ENCODE measurements at regions of chr20 and their contacts with region 1.

Region 1: GRCh38 chr20:50731055-50731871 is at the start of gene PARD6B:
- DNase-seq: peak; percentile 99 to 100 (median 100)
- ATAC-seq: peak; percentile 84
- H3K4me3 ChIP-seq: peak within 1 kb of the TSS; percentile 89
- H3K27ac ChIP-seq: peak within 1 kb of the TSS; percentile 83
- H3K4me1 ChIP-seq: peaks cover 41 to 54% of the 10 kb centered on the region in 2 experiments
- H3K27me3 ChIP-seq: no peaks in the 10 kb centered on the region
- CTCF ChIP-seq: no peak
- EP300 ChIP-seq: no peak
- POLR2A ChIP-seq: peak; percentile 74
- RAD21 ChIP-seq: 0 out of 4 replicates have a peak, but pooled peaks of 1 of the 2 experiments have one; percentile 2
- polyA plus RNA-seq, gene PARD6B: 2.7 to 7.4 TPM

Region 2: DNA sequence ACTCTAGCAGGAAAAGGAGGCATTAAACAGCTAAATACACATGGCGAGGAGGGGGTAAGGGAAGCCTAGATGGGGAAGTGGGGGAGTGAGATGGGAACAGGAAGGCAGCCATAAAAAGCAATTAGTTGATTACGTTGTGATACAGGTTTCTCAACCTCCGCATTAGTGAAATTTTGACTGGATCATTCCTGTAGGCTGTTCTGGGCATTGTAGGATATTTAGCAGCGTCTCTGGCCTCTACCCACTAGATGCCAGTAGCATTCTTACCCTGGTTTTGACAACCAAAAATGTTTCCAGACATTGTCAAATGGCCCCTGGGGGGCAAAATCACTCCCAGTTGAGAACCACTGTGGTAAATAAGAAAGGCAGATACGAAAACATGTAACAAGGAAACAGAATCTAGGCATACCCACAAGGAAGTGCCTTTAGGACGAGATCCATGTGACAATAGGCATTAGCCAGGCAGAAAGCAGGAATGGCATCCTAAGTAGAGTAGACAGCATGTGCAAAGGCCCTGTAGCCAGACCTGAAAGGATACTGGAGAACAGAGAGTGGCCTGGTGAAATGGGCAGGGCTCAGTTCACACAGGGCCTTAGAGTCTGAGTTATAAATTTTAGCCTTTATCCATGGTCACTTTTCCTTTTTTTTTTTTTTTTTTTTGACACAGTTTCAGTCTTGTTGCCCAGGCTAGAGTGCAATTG is 246.8 kb before region 1 on chr20:
- CTCF ChIA-PET with region 1: no interaction called
- POLR2A ChIA-PET with region 1: no interaction called
- in situ Hi-C with region 1: loop called (anchors 10 kb)
- intact Hi-C with region 1: no loop called
- DNase-seq: no peak
- ATAC-seq: no peak
- H3K4me3 ChIP-seq: no peak overlapping the region
- H3K27ac ChIP-seq: peak overlapping the region; percentile 87
- H3K4me1 ChIP-seq: peaks cover 8 to 35% of the 10 kb centered on the region in 2 experiments; a peak in 4 of 5 replicates
- H3K27me3 ChIP-seq: no peaks in the 10 kb centered on the region
- CTCF ChIP-seq: peak in 1 of 3 experiments; percentile 28; a peak in 2 of 6 replicates
- EP300 ChIP-seq: no peak
- POLR2A ChIP-seq: no peak
- RAD21 ChIP-seq: 0 out of 4 replicates have a peak, but pooled peaks of 1 of the 2 experiments have one; percentile 9

Region 3: GRCh38 chr20:50690634-50691572 is 40.4 kb before region 1 on chr20 and contains the start of gene RIPOR3:
- CTCF ChIA-PET with region 1: no interaction called
- POLR2A ChIA-PET with region 1: interaction called, 3 read pairs
- in situ Hi-C with region 1: no loop called
- intact Hi-C with region 1: loop called (anchors 5 kb)
- DNase-seq: peak; percentile 82 to 97 (median 91)
- ATAC-seq: peak; percentile 81
- H3K4me3 ChIP-seq: peak within 1 kb of the TSS; percentile 52
- H3K27ac ChIP-seq: peak within 1 kb of the TSS; percentile 85
- H3K4me1 ChIP-seq: peaks cover 46 to 47% of the 10 kb centered on the region in 2 experiments
- H3K27me3 ChIP-seq: no peaks in the 10 kb centered on the region
- CTCF ChIP-seq: peak in 1 of 3 experiments; percentile 11; a peak in 1 of 6 replicates
- EP300 ChIP-seq: peak; percentile 96
- POLR2A ChIP-seq: peak; percentile 72
- RAD21 ChIP-seq: no peak
- polyA plus RNA-seq, gene RIPOR3: 3.3 to 3.8 TPM

Region 4: DNA sequence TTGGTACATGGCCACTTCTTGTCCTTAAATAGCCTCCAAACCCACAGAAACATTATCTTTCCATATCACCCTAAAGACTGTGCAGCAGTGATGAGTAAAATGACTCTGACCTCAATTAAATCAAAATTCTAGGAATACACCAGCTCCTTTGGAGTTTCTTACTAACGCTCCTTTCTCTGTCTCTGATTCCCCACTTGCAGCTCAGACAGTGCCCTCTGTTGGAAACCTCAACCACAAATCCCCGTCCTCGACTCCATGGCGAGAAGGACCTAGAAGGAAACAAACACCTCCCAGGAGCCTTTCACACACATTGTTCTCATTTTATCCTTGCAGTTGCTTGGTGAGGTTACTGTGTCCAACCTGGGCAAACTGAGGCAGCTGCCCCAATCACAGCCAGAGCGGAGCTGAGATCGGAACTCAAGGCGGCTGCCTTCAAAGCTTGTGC is 17.6 kb before region 1 on chr20:
- CTCF ChIA-PET with region 1: no interaction called
- POLR2A ChIA-PET with region 1: interaction called, 21 read pairs
- in situ Hi-C with region 1: no loop called
- intact Hi-C with region 1: no loop called
- DNase-seq: peak in 2 of 4 experiments; percentile 56 to 75
- ATAC-seq: peak; percentile 82
- H3K4me3 ChIP-seq: no peak overlapping the region
- H3K27ac ChIP-seq: no peak overlapping the region
- H3K4me1 ChIP-seq: peaks cover 15 to 22% of the 10 kb centered on the region in 2 experiments
- H3K27me3 ChIP-seq: no peaks in the 10 kb centered on the region
- CTCF ChIP-seq: peak; percentile 69 to 78 (median 69)
- EP300 ChIP-seq: peak; percentile 58
- POLR2A ChIP-seq: no peak
- RAD21 ChIP-seq: peak; percentile 75 to 86

Region 5: DNA sequence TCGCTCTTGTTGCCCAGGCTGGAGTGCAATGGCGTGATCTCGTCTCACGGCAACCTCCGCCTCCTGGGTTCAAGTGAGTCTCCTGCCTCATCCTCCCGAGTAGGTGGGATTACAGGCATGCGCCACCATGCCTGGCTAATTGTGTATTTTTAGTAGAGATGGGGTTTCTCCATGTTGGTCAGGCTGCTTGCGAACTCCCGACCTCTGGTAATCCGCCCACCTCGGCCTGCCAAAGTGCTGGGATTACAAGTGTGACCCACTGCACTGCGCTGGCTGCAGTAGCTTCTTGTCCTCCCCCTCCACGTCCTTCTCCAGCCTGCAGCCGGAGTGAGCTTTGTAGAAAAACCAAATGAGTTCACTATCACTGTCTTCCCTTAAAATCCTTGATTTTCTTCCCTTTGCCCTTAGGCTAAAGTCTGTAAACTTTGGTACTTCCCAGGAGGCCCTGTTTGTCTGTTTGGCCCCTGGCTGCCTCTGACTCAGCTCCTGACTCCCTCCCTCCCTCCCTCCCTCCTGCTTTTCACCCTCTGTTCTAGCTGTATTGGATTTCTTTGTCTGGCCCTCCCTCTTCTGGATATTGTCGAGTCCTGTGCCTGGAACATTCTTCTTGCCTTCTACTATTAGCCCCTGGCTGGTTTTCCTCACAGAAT is 13.0 kb after region 1 on chr20:
- CTCF ChIA-PET with region 1: no interaction called
- POLR2A ChIA-PET with region 1: interaction called, 10 read pairs
- in situ Hi-C with region 1: no loop called
- intact Hi-C with region 1: no loop called
- DNase-seq: peak; percentile 52 to 85 (median 67)
- ATAC-seq: peak; percentile 84
- H3K4me3 ChIP-seq: no peak overlapping the region
- H3K27ac ChIP-seq: peak overlapping the region; percentile 81
- H3K4me1 ChIP-seq: peaks cover 30 to 31% of the 10 kb centered on the region in 2 experiments
- H3K27me3 ChIP-seq: no peaks in the 10 kb centered on the region
- CTCF ChIP-seq: peak; percentile 43 to 74 (median 57); a peak in 5 of 6 replicates
- EP300 ChIP-seq: no peak
- POLR2A ChIP-seq: no peak; the same call in 1 of the 2 replicates
- RAD21 ChIP-seq: peak; percentile 47 to 68

Region 6: GRCh38 chr20:50977051-50978045 is 246.1 kb after region 1 on chr20:
- CTCF ChIA-PET with region 1: no interaction called
- POLR2A ChIA-PET with region 1: no interaction called
- in situ Hi-C with region 1: no loop called
- intact Hi-C with region 1: no loop called
- DNase-seq: no peak
- ATAC-seq: peak; percentile 32; the same call in 2 of the 3 replicates
- H3K4me3 ChIP-seq: no peak overlapping the region
- H3K27ac ChIP-seq: no peak overlapping the region
- H3K4me1 ChIP-seq: peaks cover 0 to 9% of the 10 kb centered on the region in 2 experiments; a peak in 3 of 5 replicates
- H3K27me3 ChIP-seq: peaks cover 32 to 54% of the 10 kb centered on the region in 2 experiments
- CTCF ChIP-seq: 0 out of 6 replicates have a peak, but pooled peaks of 1 of the 3 experiments have one; percentile 8
- EP300 ChIP-seq: no peak
- POLR2A ChIP-seq: no peak
- RAD21 ChIP-seq: no peak